Activated B cell treated with CpG ODN at 0.5 μM for 24 hours (primary cell): ENCODE measurements at regions of chr2 and their contacts with region 1.

Region 1: DNA sequence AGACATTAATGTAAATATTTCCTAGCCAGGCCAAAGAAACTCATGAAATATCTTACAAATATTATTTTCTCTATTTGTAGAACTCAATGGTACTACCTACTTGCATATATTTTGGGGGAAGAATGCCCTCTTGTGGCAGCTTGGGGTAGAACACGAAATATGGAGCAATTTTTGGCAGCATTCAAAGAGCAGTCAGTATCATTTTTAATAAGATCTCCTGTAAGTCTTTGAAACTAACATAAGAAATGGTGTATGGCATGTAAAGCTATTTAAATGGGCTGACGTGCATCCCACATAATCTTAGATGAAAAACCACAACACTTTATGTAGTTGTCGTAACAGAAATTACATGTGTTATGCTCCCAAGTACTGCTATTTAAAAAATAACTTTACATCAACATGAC is 62.3 kb upstream of the CCDC195 start:
- DNase-seq: no peak
- ATAC-seq: peak; percentile 69
- H3K4me3 Mint-ChIP-seq: no peak overlapping the region
- H3K27ac Mint-ChIP-seq: no peak overlapping the region
- H3K4me1 Mint-ChIP-seq: no peaks in the 10 kb centered on the region
- H3K27me3 Mint-ChIP-seq: no peaks in the 10 kb centered on the region
- CTCF ChIP-seq: peak; percentile 70

Region 2: GRCh38 chr2:224357098-224357901 is 421.2 kb before region 1 on chr2:
- CTCF ChIA-PET with region 1: interaction called, 12 read pairs
- POLR2A ChIA-PET with region 1: no interaction called
- intact Hi-C with region 1: loop called (anchors 1 kb)
- DNase-seq: no peak
- ATAC-seq: peak; percentile 73
- H3K4me3 Mint-ChIP-seq: no peak overlapping the region
- H3K27ac Mint-ChIP-seq: no peak overlapping the region
- H3K4me1 Mint-ChIP-seq: no peaks in the 10 kb centered on the region
- H3K27me3 Mint-ChIP-seq: peaks cover 8% of the 10 kb centered on the region
- CTCF ChIP-seq: no peak

Region 3: GRCh38 chr2:224611938-224612337 is 166.5 kb before region 1 on chr2:
- CTCF ChIA-PET with region 1: no interaction called
- POLR2A ChIA-PET with region 1: no interaction called
- intact Hi-C with region 1: loop called (anchors 1 kb)
- DNase-seq: no peak
- ATAC-seq: peak; percentile 42
- H3K4me3 Mint-ChIP-seq: no peak overlapping the region
- H3K27ac Mint-ChIP-seq: no peak overlapping the region
- H3K4me1 Mint-ChIP-seq: no peaks in the 10 kb centered on the region
- H3K27me3 Mint-ChIP-seq: no peaks in the 10 kb centered on the region
- CTCF ChIP-seq: no peak